HEK293T (cell line): ENCODE measurements at regions of chr14 and their contacts with region 1.

Region 1: GRCh38 chr14:93115069-93115820 is 480 bp downstream of the ITPK1 start:
- DNase-seq: peak; percentile 81

Region 2: GRCh38 chr14:92844204-92844603 is 271.0 kb before region 1 on chr14:
- CTCF ChIA-PET with region 1: no interaction called
- POLR2A ChIA-PET with region 1: no interaction called
- DNase-seq: no peak

Region 3: GRCh38 chr14:93096691-93097322 is 18.4 kb before region 1 on chr14:
- CTCF ChIA-PET with region 1: interaction called, 16 read pairs
- POLR2A ChIA-PET with region 1: no interaction called
- DNase-seq: no peak

Region 4: DNA sequence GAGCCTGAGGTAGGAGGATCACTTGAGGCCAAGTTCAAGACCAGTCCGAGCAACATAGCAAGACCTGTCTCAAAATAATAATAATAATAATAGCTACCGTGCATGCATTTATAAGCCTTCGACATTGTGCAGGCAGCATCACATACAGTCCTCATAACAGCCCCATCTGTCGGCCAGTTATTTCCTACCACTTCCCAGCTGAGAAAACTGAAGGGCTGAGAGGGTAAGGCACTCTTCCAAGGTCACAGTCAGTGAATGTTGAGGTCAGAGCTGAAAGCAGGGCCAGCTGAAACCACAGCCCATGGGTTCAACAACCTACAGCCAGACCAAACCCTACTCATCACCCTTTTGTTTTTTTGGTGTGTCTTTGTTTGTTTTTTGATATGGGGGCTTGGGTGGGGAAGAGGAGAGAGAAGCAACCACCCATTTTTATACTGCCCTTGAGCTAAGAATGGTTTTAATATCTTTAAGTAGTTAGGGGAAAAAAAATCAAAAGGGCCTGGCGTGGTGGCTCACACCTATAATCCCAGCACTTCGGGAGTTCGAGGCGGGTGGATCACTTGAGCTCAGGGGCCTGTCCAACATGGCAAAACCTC is 17.3 kb after region 1 on chr14:
- CTCF ChIA-PET with region 1: interaction called, 49 read pairs
- POLR2A ChIA-PET with region 1: interaction called, 7 read pairs
- DNase-seq: peak; percentile 50

Region 5: DNA sequence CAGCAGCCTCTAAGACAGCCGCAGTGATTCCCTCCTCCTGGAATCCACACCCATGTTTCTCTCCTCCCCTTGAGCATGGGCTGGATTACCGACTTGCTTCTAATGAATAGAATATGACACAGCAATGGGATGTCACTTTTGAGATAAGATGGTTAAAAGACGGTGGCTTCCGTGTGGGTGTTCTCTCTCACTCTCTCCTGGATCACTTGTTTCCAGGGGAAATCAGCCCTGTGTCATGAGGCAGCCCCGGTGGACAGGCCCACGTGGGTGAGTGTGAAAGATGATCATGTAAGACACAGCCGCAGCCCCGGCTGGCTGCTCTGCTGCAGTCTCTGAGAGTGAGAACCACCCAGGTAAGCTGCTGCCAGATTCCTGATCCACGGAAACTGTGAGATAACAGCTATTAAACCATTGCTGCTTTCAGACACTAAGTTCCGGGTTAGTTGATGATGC is 58.7 kb after region 1 on chr14:
- CTCF ChIA-PET with region 1: interaction called, 11 read pairs
- POLR2A ChIA-PET with region 1: interaction called, 4 read pairs
- DNase-seq: no peak

Region 6: GRCh38 chr14:93219103-93219726 is 104.0 kb after region 1 on chr14:
- CTCF ChIA-PET with region 1: interaction called, 11 read pairs
- POLR2A ChIA-PET with region 1: no interaction called
- DNase-seq: peak; percentile 46